ENCODE measurements at regions of chr1 and their contacts with region 1.

Region 1: GRCh38 chr1:36187800-36188593 is 32.0 kb downstream of the MAP7D1 start:
- DNase-seq: peak; percentile 96
- H3K4me3 ChIP-seq: no peak overlapping the region
- H3K27ac ChIP-seq: peak overlapping the region; percentile 87 to 100 (median 94)
- H3K4me1 ChIP-seq: peaks cover 0 to 28% (median 26%) of the 10 kb centered on the region in 4 donors
- H3K27me3 ChIP-seq: no peaks in the 10 kb centered on the region
- CTCF ChIP-seq: peak; percentile 79 to 98 (median 95)
- EP300 ChIP-seq: no peak
- POLR2A ChIP-seq: no peak

Region 2: DNA sequence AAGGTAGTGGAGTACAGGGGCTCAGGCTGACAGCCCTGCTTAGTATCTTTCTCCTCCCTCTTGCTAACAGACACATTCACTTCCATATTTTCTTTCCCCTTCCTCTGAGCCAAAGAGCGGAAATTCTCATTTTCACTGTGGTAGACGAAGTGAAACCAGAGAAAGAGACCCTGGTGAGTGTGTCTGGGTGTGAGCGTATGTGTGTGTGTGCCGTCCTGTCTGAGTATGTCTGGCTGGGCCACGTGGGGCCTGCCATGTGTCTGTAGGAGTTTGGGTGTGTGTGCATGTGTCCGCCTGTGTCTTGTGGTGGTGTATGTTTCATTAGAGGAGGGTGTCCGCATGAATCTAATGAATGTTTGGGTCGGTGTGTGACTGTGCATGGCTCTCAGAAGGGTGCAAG is 64.6 kb before region 1 on chr1:
- intact Hi-C with region 1: no loop called
- DNase-seq: no peak
- H3K4me3 ChIP-seq: no peak overlapping the region
- H3K27ac ChIP-seq: peak overlapping the region in 2 of 4 donors; percentile 11 to 66
- H3K4me1 ChIP-seq: peaks cover 0 to 33% (median 21%) of the 10 kb centered on the region in 4 donors
- H3K27me3 ChIP-seq: no peaks in the 10 kb centered on the region
- CTCF ChIP-seq: no peak
- EP300 ChIP-seq: no peak
- POLR2A ChIP-seq: no peak

Region 3: DNA sequence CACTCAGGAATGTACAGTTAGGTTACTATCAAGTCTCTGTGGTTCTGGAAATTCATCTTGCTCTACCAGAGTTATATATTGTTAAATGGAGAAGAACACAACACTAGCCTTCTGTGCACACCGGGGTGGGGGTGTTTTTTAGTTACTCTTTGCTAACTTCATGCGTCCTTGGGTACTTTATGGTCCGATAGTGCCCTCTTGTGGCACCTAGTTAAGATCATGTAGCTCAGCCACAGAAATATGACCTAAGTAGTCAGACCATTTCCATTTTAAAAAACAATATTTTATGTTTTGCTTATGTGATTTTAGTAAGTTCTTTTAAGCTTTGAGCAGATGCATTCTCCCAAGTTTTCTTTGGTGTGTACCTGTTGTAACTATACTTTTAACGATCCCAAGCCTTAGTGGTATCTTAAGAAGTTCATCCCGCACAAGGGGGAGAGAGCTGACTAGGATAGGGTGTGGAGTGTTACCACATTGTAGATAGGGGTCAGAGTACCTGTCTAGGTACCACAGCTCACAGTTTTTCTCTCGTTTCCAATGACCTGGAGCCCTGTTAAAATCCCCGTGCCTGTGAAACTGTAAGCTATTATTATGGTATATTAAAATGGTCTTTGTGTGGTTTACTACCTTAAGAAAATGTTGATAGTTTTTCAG is 97.6 kb after region 1 on chr1:
- intact Hi-C with region 1: loop called (anchors 2 kb)
- DNase-seq: peak; percentile 82
- H3K4me3 ChIP-seq: no peak overlapping the region
- H3K27ac ChIP-seq: peak overlapping the region; percentile 20 to 71 (median 52)
- H3K4me1 ChIP-seq: peaks cover 0 to 53% (median 24%) of the 10 kb centered on the region in 4 donors
- H3K27me3 ChIP-seq: no peaks in the 10 kb centered on the region
- CTCF ChIP-seq: peak; percentile 56 to 70 (median 58)
- EP300 ChIP-seq: no peak
- POLR2A ChIP-seq: no peak

Measured in sigmoid colon (tissue), 7 donors.